Caco-2 (cell line): ENCODE measurements at regions of chr13 and their contacts with region 1.

Region 1: DNA sequence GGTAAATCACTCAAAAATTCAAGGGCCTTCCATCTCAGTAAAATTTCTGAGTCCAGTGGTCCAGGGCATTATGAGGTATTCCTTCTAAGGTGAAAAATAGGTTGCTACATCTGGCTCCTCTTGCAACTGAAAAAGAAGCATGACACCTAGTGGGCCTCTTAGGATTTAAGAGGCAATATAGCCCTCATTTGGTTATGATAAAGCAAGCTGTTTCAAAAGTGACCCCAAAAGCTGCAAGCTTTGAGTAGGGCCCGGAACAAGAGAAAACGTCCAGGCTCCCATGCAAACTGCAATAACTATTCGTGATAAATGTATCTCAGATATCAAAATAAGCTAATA is 1910.2 kb upstream of the PRR20A start:
- DNase-seq: no peak
- H3K4me3 ChIP-seq: no peak overlapping the region
- H3K4me3 Mint-ChIP-seq: no peak overlapping the region
- H3K27ac Mint-ChIP-seq: no peak overlapping the region
- H3K4me1 ChIP-seq: no peaks in the 10 kb centered on the region
- H3K4me1 Mint-ChIP-seq: no peaks in the 10 kb centered on the region
- H3K27me3 ChIP-seq: no peaks in the 10 kb centered on the region
- H3K27me3 Mint-ChIP-seq: no peaks in the 10 kb centered on the region
- CTCF ChIP-seq: peak in 1 of 2 experiments; percentile 27

Region 2: GRCh38 chr13:55087085-55087484 is 143.5 kb before region 1 on chr13:
- CTCF ChIA-PET with region 1: no interaction called
- POLR2A ChIA-PET with region 1: no interaction called
- intact Hi-C with region 1: loop called (anchors 1 kb)
- DNase-seq: no peak
- H3K4me3 ChIP-seq: no peak overlapping the region
- H3K4me3 Mint-ChIP-seq: no peak overlapping the region
- H3K27ac Mint-ChIP-seq: no peak overlapping the region
- H3K4me1 ChIP-seq: no peaks in the 10 kb centered on the region
- H3K4me1 Mint-ChIP-seq: no peaks in the 10 kb centered on the region
- H3K27me3 ChIP-seq: no peaks in the 10 kb centered on the region
- H3K27me3 Mint-ChIP-seq: no peaks in the 10 kb centered on the region
- CTCF ChIP-seq: no peak

Region 3: DNA sequence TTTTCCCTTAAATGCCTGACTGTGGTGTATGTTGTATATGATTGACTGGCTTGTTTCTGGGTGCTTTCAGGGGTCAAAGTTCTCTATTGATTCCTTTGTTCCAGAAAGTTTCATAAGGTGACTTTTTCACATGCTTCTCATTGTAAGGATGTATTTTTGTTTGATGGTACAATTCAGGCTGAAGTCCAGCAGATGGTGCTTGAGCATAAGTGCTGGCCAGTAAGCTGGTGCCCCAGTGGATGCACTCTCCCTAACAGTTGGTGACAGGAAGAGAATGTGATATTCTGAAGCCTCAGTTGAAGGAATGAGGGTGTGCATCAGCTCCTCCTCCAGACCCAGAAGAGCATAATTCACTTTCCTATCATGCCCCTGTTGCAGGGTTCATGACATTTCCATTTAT is 31.4 kb before region 1 on chr13:
- CTCF ChIA-PET with region 1: interaction called, 3 read pairs
- POLR2A ChIA-PET with region 1: no interaction called
- intact Hi-C with region 1: loop called (anchors 1 kb)
- DNase-seq: peak; percentile 26 to 45
- H3K4me3 ChIP-seq: no peak overlapping the region
- H3K4me3 Mint-ChIP-seq: no peak overlapping the region
- H3K27ac Mint-ChIP-seq: no peak overlapping the region
- H3K4me1 ChIP-seq: no peaks in the 10 kb centered on the region
- H3K4me1 Mint-ChIP-seq: no peaks in the 10 kb centered on the region
- H3K27me3 ChIP-seq: no peaks in the 10 kb centered on the region; the same call in 1 of the 2 replicates
- H3K27me3 Mint-ChIP-seq: no peaks in the 10 kb centered on the region
- CTCF ChIP-seq: peak in 1 of 2 experiments; percentile 53